Activated B cell treated with CpG ODN at 0.5 μM for 24 hours (primary cell): ENCODE measurements at regions of chr1 and their contacts with region 1.

Region 1: GRCh38 chr1:156618853-156619581 is at the start of gene HAPLN2:
- DNase-seq: no peak
- ATAC-seq: peak; percentile 28
- H3K4me3 Mint-ChIP-seq: no peak within 1 kb of the TSS
- H3K27ac Mint-ChIP-seq: no peak within 1 kb of the TSS
- H3K4me1 Mint-ChIP-seq: no peaks in the 10 kb centered on the region
- H3K27me3 Mint-ChIP-seq: peaks cover 51% of the 10 kb centered on the region
- CTCF ChIP-seq: no peak
- total RNA-seq, gene HAPLN2: not detected in 2 replicates

Region 2: DNA sequence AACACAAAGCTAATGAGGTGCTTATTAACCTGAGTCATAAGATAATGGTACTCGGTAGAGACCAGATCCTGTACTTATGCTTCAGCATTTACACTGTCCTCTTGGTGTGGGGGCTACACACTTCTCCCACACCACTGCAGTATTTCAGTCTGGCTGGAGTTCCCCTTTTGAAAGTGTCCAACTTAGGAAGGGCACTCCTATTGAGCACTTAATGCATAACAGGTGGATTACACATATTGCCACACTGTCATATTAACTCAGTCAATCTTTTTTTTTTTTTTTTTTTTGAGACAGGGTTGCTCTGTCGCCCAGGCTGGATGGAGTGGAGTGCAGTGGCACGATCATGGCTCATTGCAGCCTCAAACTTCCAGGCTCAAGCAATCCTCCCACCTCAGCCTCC is 19.2 kb before region 1 on chr1:
- CTCF ChIA-PET with region 1: no interaction called
- POLR2A ChIA-PET with region 1: no interaction called
- intact Hi-C with region 1: no loop called
- DNase-seq: no peak
- ATAC-seq: peak; percentile 66
- H3K4me3 Mint-ChIP-seq: peak overlapping the region; percentile 99
- H3K27ac Mint-ChIP-seq: peak overlapping the region; percentile 99
- H3K4me1 Mint-ChIP-seq: peaks cover 36% of the 10 kb centered on the region
- H3K27me3 Mint-ChIP-seq: no peaks in the 10 kb centered on the region
- CTCF ChIP-seq: no peak

Region 3: GRCh38 chr1:156677616-156678596 is 58.9 kb after region 1 on chr1:
- CTCF ChIA-PET with region 1: interaction called, 63 read pairs
- POLR2A ChIA-PET with region 1: no interaction called
- intact Hi-C with region 1: no loop called
- DNase-seq: no peak
- ATAC-seq: peak; percentile 49
- H3K4me3 Mint-ChIP-seq: peak overlapping the region; percentile 32
- H3K27ac Mint-ChIP-seq: no peak overlapping the region
- H3K4me1 Mint-ChIP-seq: peaks cover 27% of the 10 kb centered on the region
- H3K27me3 Mint-ChIP-seq: peaks cover 69% of the 10 kb centered on the region
- CTCF ChIP-seq: no peak